Dorsolateral prefrontal cortex (tissue), 120 donors: ENCODE measurements at regions of chr1 and their contacts with region 1.

Region 1: DNA sequence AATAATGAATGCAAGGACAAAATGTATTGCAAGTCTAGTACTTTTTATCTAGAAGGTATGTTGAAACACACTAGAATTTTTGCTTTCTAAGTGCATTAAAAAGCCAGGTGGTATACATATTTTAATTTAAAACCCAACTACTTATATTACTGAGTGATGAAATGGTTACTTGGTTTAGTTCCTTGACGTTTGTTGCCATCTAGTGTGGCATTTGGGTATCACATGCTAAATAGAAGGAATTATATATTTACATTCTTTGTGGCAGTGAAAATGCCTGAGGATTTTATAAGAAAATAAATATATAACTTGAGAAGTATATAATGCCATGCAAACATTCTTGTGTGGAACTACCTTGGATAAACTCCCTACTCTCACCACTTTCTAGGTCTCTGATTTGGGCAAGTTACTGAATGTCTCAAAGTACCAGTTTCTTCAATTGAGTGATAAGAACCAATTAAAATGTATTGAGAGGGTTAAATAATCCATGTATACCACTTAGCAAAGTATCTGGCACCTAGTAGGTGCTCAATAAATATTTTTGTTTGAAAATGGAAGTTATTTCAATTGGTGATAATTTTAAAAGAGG is 69.6 kb downstream of the SDCCAG8 start:
- DNase-seq: no peak
- H3K4me3 ChIP-seq: no peak overlapping the region
- H3K27ac ChIP-seq: peak overlapping the region in 1 of 59 donors; percentile 4
- H3K27me3 ChIP-seq: no peaks in the 10 kb centered on the region
- CTCF ChIP-seq: peak; percentile 68 to 99 (median 86)

Region 2: DNA sequence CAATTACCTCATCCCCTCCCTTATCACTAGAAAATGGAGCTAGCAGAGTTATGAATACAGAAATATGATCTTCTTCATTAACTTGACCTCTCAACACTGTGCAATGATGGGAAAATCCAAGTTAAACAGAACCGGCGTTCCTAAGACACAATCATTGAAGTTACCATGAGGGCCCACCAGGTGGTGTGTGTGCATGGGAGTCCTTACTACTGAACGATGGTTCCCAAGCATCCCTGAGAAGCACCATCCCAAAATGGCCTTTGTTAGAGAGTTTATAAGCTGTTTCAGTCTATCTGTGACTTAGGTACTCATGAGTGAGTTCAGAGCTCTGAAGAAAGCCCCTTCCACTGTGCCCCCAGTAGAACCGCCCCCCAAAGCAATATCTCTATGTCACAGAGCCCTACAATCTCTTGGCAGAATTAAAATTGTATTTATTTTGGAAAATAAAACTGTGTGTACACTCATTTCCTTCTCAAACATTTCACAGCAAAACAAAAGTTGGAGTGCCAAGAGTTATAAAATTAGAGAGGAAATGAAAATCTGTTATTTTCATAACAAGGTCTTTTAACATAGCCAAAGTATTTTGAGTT is 857.7 kb before region 1 on chr1:
- intact Hi-C with region 1: loop called in 1 of 2 experiments (anchors 2 kb)
- DNase-seq: peak in 9 of 10 donors; percentile 38 to 84 (median 60)
- H3K4me3 ChIP-seq: no peak overlapping the region
- H3K27ac ChIP-seq: no peak overlapping the region
- H3K27me3 ChIP-seq: peaks cover 0 to 4% (median 0%) of the 10 kb centered on the region in 45 donors
- CTCF ChIP-seq: peak; percentile 59 to 87 (median 78)

Region 3: GRCh38 chr1:242828199-242828598 is 497.2 kb before region 1 on chr1:
- intact Hi-C with region 1: loop called (anchors 2 to 5 kb)
- DNase-seq: peak; percentile 6 to 77 (median 57)
- H3K4me3 ChIP-seq: peak overlapping the region in 4 of 59 donors; percentile 7 to 37 (median 22)
- H3K27ac ChIP-seq: peak overlapping the region in 48 of 59 donors; percentile 8 to 86 (median 66)
- H3K27me3 ChIP-seq: no peaks in the 10 kb centered on the region
- CTCF ChIP-seq: peak in 53 of 56 donors; percentile 24 to 77 (median 56)

Region 4: GRCh38 chr1:243343970-243344937 is 18.9 kb after region 1 on chr1:
- intact Hi-C with region 1: no loop called
- DNase-seq: peak in 1 of 10 donors; percentile 25
- H3K4me3 ChIP-seq: no peak overlapping the region
- H3K27ac ChIP-seq: peak overlapping the region in 3 of 59 donors; percentile 3 to 30 (median 13)
- H3K27me3 ChIP-seq: no peaks in the 10 kb centered on the region
- CTCF ChIP-seq: peak; percentile 59 to 95 (median 82)

Region 5: GRCh38 chr1:243950166-243950565 is 624.8 kb after region 1 on chr1:
- intact Hi-C with region 1: no loop called
- DNase-seq: no peak
- H3K4me3 ChIP-seq: no peak overlapping the region
- H3K27ac ChIP-seq: no peak overlapping the region
- H3K27me3 ChIP-seq: no peaks in the 10 kb centered on the region
- CTCF ChIP-seq: no peak